Left cardiac atrium (tissue), 4 donors: ENCODE measurements at regions of chr6 and their contacts with region 1.

Region 1: GRCh38 chr6:136643850-136644596 is 93.8 kb upstream of the MAP7 start:
- DNase-seq: peak; percentile 92
- ATAC-seq: peak; percentile 92

Region 2: GRCh38 chr6:136737871-136738691 is 94.1 kb after region 1 on chr6:
- intact Hi-C with region 1: no loop called
- DNase-seq: peak; percentile 39
- ATAC-seq: peak; percentile 82 to 87

Region 3: DNA sequence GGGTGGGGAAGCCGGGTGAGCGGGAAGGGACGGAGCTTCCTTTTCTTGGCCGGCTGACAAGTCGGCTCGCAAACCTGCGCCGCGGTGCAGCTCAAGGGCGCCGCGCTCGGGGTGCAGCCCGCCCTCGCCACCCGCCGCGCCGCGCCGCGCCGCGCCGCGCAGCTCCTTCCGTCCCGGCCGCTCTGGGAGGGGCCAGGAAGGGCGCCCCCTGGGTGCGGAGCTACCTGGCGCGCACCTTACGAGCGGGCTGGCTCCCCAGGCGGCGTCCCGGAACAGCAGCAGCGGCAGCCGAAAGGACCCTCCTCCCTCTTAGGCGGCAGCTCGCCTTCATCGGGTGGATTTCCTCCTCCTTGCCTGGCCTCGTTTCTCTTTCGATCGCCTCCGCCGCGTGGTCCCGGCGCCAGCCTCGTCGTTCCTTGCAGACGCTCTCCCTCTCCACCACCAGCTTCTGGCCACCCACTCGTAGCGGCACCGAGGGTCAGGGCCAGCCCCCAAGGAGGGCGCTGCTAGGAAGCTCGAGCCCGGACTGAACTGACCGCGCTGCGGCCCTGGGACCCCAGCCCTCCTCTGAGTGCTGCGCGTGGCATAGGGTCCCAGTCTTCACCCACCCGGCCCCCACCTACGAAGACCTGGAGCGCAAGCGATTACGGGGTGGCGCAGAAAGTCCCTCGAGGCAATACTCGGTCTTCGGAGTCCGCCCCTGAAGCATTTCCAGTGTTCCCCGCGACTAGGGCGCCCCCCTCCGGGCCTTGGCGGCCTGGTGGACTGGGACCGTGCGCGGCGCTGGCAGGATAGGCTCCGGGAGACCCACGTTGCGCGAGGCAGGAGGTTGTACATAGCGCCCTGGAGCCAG is 148.6 kb after region 1 on chr6 and contains the start of gene MAP3K5:
- intact Hi-C with region 1: loop called (anchors 1 to 5 kb)
- DNase-seq: peak; percentile 94
- ATAC-seq: peak; percentile 91 to 95
- total RNA-seq, gene MAP3K5: 6.6 to 9.7 TPM

Region 4: DNA sequence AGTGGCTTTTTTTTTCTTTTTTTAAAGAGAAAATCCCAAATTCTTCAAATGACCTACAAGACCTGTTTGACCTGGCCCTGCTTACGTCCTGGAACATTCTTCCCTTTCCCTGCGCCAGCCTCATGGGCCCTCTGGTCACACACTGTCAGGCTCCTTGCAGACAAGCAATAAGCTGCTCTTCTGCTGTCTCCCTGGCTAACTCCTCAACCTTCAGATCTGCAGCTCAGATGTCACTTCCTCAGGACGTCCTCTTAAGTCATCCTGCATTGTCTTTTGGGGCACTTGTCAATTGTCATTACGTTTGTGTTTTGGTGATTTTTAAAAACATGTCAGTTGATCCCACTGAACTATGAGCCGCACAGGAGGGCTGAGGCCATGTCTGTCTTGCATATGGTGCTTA is 249.2 kb after region 1 on chr6:
- intact Hi-C with region 1: no loop called
- DNase-seq: no peak
- ATAC-seq: no peak

Region 5: DNA sequence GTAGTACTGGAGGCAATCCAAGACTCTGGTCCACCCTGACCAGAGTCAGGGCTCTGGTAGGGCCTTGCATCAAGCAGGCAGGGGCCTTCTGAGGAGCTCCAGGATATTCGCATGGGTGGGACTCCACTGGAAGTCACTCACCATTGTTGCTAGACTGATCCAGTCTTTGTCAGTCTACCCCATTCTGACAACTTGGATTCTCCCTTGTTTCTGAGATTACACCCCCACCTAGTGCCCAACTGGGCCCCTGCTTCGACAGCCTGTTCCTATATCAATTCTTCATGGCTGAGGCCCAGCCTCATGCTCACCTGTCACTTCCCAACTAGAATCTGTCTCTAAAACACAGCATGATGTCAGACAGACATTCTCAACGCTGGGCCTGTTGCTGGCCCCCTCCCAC is 283.3 kb after region 1 on chr6:
- intact Hi-C with region 1: loop called in 1 of 2 experiments (anchors 5 kb)
- DNase-seq: no peak
- ATAC-seq: no peak

Region 6: GRCh38 chr6:137013738-137014602 is 369.9 kb after region 1 on chr6:
- intact Hi-C with region 1: loop called in 1 of 2 experiments (anchors 10 kb)
- DNase-seq: no peak
- ATAC-seq: peak; percentile 76